Activated CD4-positive, alpha-beta T cell treated with anti-CD3 and anti-CD28 coated beads for 36 hours (primary cell): ENCODE measurements at regions of chr1 and their contacts with region 1.

Region 1: DNA sequence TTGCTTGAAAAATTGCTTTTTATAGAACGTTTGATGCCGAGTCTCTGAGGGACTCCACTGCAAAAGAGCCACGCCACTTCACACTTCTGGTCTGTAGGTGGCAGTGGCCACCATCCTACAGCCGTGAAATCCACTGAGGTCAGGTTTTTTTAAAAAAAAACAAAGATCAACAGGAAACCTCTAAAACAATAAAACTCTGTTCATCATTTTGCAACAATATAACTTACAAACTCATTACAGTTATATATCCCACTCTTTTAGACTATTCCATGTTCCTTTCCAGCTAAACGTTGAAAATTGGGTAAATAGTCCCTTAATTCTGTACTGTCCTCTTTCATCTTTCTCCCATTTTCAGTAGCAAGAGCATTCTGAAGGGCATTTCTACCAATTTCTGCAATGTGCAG is 64.6 kb upstream of the FMN2 start:
- DNase-seq: peak; percentile 46
- ATAC-seq: peak; percentile 39
- H3K4me3 Mint-ChIP-seq: no peak overlapping the region
- H3K27ac Mint-ChIP-seq: no peak overlapping the region
- H3K4me1 Mint-ChIP-seq: no peaks in the 10 kb centered on the region
- H3K27me3 Mint-ChIP-seq: peaks cover 3% of the 10 kb centered on the region

Region 2: GRCh38 chr1:240126821-240127220 is 99.8 kb after region 1 on chr1:
- CTCF ChIA-PET with region 1: no interaction called
- POLR2A ChIA-PET with region 1: no interaction called
- intact Hi-C with region 1: no loop called
- DNase-seq: no peak
- ATAC-seq: no peak
- H3K4me3 Mint-ChIP-seq: no peak overlapping the region
- H3K27ac Mint-ChIP-seq: no peak overlapping the region
- H3K4me1 Mint-ChIP-seq: no peaks in the 10 kb centered on the region
- H3K27me3 Mint-ChIP-seq: peaks cover 3% of the 10 kb centered on the region

Region 3: GRCh38 chr1:240149484-240150094 is 122.5 kb after region 1 on chr1:
- CTCF ChIA-PET with region 1: interaction called, 6 read pairs
- POLR2A ChIA-PET with region 1: no interaction called
- intact Hi-C with region 1: loop called (anchors 1 kb)
- DNase-seq: no peak
- ATAC-seq: no peak
- H3K4me3 Mint-ChIP-seq: no peak overlapping the region
- H3K27ac Mint-ChIP-seq: no peak overlapping the region
- H3K4me1 Mint-ChIP-seq: no peaks in the 10 kb centered on the region
- H3K27me3 Mint-ChIP-seq: peaks cover 12% of the 10 kb centered on the region

Region 4: GRCh38 chr1:240169188-240169587 is 142.1 kb after region 1 on chr1:
- CTCF ChIA-PET with region 1: no interaction called
- POLR2A ChIA-PET with region 1: no interaction called
- intact Hi-C with region 1: loop called in 1 of 2 experiments (anchors 1 kb)
- DNase-seq: no peak
- ATAC-seq: no peak
- H3K4me3 Mint-ChIP-seq: no peak overlapping the region
- H3K27ac Mint-ChIP-seq: no peak overlapping the region
- H3K4me1 Mint-ChIP-seq: no peaks in the 10 kb centered on the region
- H3K27me3 Mint-ChIP-seq: peaks cover 2% of the 10 kb centered on the region